ENCODE measurements at regions of chr9 and their contacts with region 1.

Region 1: DNA sequence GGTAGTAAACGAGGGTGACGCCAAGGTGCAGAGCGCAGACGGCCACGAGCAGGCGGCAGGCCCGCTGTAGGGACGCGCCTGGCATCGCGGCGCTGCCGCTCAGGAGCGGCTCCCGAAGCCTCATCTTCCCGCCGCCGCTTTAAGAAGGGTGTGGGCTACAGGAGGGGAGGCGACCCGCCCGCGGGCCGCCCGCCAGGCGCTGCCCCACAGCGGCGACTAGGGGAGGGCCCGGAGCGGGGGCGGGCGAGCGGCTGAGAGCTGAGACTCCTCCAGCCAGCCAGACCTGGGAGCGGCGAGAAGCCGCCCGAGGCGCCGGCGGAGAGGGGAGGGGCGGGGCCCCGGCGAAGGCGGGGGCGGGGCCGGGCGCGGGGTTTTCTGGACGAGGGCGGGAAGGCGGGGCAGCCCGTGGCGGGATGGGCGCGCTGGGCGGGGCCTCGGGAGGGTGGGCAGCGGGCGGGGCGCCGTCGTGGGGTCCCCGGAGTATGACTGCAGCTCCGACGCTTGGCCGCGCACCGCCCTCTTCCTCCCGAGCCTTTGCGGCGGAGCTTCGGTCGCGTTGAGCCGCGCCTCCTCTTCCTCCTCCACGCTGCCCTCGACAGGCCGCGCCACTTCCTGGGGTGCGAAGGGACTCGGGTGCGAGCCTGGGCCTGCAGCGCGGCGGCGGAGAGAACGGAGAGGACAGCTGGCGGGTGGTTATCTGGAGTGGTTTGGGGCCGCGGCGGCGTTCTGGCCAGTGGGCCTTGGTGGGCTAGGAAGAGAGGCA is at the start of gene B4GALT1:
- DNase-seq: peak; percentile 64 to 89 (median 79)
- H3K4me3 ChIP-seq: peak within 1 kb of the TSS; percentile 57 to 92 (median 82)
- H3K27ac ChIP-seq: peak within 1 kb of the TSS; percentile 30 to 94 (median 84)
- H3K27me3 ChIP-seq: no peaks in the 10 kb centered on the region
- CTCF ChIP-seq: peak in 10 of 56 donors; percentile 2 to 34 (median 17)
- total RNA-seq, gene B4GALT1: 2.8 to 13.3 (median 6.0) TPM

Region 2: DNA sequence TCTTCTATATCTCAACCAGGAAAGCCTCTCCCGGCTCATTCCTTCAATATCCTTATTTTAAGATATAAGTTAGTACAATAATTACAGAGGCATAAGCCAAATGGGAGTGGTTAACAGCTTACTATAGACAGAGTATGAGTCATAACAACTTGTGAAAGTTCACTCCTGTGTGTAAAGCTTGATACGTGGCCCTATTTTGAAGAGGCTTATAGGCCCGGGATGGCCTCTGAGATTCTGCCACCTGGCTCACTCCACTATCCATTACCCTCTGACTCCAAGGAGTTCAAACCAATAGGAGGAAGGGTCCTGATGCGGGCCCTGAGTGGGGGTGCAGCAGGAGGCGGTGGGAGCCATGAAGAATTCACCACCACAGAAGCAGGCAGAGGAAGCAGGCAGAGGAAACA is 36.7 kb before region 1 on chr9:
- intact Hi-C with region 1: loop called in 1 of 2 experiments (anchors 2 kb)
- DNase-seq: no peak
- H3K4me3 ChIP-seq: no peak overlapping the region
- H3K27ac ChIP-seq: peak overlapping the region in 4 of 59 donors; percentile 20 to 53 (median 24)
- H3K27me3 ChIP-seq: no peaks in the 10 kb centered on the region
- CTCF ChIP-seq: no peak

Region 3: DNA sequence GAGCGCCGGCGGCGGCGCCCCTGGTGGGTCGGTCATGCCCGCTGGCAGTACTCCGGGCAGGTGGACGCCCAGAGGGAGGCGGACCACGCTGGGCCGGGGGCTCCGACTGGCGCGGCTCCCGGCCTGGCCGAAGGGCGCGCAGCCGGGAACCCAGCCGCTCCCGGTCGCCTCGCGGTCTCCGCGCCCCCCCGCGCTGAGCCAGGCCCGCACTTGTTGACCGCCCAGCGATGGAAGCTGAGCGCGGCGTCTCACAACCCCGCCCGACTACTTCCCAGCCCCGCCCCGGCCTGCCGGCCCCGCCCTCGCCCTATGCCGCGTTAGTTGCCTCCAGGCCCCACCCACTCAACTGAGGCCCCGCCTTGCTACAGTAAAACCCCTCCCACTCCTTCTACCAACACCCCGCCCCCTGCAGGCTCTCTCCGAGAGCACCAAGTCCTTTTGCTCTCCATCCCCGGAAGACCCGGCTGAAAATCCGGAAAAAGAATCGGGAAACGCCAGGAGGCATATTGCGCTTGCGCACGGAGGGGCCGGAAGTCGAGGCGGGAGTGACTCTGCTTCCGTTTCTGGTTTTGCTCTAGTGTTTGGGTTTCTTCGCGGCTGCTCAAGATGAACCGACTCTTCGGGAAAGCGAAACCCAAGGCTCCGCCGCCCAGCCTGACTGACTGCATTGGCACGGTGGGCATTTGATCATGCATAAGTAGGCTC is 97.4 kb after region 1 on chr9 and contains the starts of genes BAG1 and CHMP5:
- intact Hi-C with region 1: loop called in 1 of 2 experiments (anchors 5 kb)
- DNase-seq: peak; percentile 99 to 100 (median 100)
- H3K4me3 ChIP-seq: peak within 1 kb of the TSS; percentile 50 to 100 (median 94)
- H3K27ac ChIP-seq: peak within 1 kb of the TSS; percentile 49 to 95 (median 88)
- H3K27me3 ChIP-seq: no peaks in the 10 kb centered on the region
- CTCF ChIP-seq: peak in 52 of 56 donors; percentile 19 to 73 (median 50)
- total RNA-seq, gene BAG1: 49.1 to 127 (median 80.7) TPM
- total RNA-seq, gene CHMP5: 41.0 to 98.2 (median 72.4) TPM

Region 4: DNA sequence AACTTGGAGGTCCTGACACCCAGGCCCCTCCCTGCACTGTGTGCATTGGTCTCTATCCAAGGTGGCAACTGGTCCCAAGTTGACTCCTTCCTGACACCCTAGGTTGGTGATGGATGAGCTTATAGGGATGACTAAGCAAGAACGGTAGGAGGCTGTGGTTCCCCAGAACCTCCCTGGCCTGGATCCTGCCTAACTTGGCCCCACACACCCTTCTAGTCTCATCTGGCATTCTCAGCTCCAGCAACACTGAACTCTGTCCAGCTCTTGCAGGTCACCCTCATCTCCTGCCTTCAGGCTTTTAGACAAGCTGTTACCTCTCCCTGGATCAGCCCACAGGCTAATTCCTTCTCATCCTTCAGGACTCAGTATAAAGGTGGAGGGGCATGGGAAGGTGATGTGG is 263.7 kb after region 1 on chr9:
- intact Hi-C with region 1: no loop called
- DNase-seq: no peak
- H3K4me3 ChIP-seq: no peak overlapping the region
- H3K27ac ChIP-seq: no peak overlapping the region
- H3K27me3 ChIP-seq: peaks cover 0 to 7% (median 0%) of the 10 kb centered on the region in 45 donors
- CTCF ChIP-seq: no peak